ENCODE measurements at regions of chr5 and their contacts with region 1.

Region 1: GRCh38 chr5:53739111-53739510 is 178.7 kb downstream of the NDUFS4 start:
- DNase-seq: no peak
- ATAC-seq: no peak
- H3K4me3 ChIP-seq: no peak overlapping the region
- H3K4me3 Mint-ChIP-seq: no peak overlapping the region
- H3K27ac ChIP-seq: no peak overlapping the region
- H3K27ac Mint-ChIP-seq: no peak overlapping the region
- H3K4me1 ChIP-seq: no peaks in the 10 kb centered on the region
- H3K4me1 Mint-ChIP-seq: no peaks in the 10 kb centered on the region
- H3K27me3 ChIP-seq: no peaks in the 10 kb centered on the region
- H3K27me3 Mint-ChIP-seq: peaks cover 1 to 6% of the 10 kb centered on the region in 2 donors

Region 2: GRCh38 chr5:53900677-53901076 is 161.6 kb after region 1 on chr5:
- CTCF ChIA-PET with region 1: no interaction called
- POLR2A ChIA-PET with region 1: interaction called in 1 of 2 experiments, 11 read pairs
- DNase-seq: no peak
- ATAC-seq: no peak
- H3K4me3 ChIP-seq: no peak overlapping the region
- H3K4me3 Mint-ChIP-seq: no peak overlapping the region
- H3K27ac ChIP-seq: no peak overlapping the region
- H3K27ac Mint-ChIP-seq: no peak overlapping the region
- H3K4me1 ChIP-seq: no peaks in the 10 kb centered on the region
- H3K4me1 Mint-ChIP-seq: no peaks in the 10 kb centered on the region
- H3K27me3 ChIP-seq: no peaks in the 10 kb centered on the region
- H3K27me3 Mint-ChIP-seq: no peaks in the 10 kb centered on the region